CD4-positive, alpha-beta memory T cell (primary cell): ENCODE measurements at regions of chr19 and their contacts with region 1.

Region 1: GRCh38 chr19:47243776-47244547 is 12.4 kb upstream of the CCDC9 start:
- DNase-seq: peak; percentile 85 to 91 (median 87)
- H3K4me3 ChIP-seq: peak overlapping the region; percentile 21 to 37
- H3K4me3 Mint-ChIP-seq: peak overlapping the region; percentile 63 to 89 (median 84)
- H3K27ac ChIP-seq: peak overlapping the region; percentile 40
- H3K27ac Mint-ChIP-seq: peak overlapping the region in 6 of 7 donors; percentile 86 to 99 (median 96)
- H3K4me1 ChIP-seq: peaks cover 48% of the 10 kb centered on the region
- H3K4me1 Mint-ChIP-seq: peaks cover 11 to 33% (median 22%) of the 10 kb centered on the region in 4 donors
- H3K27me3 ChIP-seq: no peaks in the 10 kb centered on the region
- H3K27me3 Mint-ChIP-seq: no peaks in the 10 kb centered on the region

Region 2: DNA sequence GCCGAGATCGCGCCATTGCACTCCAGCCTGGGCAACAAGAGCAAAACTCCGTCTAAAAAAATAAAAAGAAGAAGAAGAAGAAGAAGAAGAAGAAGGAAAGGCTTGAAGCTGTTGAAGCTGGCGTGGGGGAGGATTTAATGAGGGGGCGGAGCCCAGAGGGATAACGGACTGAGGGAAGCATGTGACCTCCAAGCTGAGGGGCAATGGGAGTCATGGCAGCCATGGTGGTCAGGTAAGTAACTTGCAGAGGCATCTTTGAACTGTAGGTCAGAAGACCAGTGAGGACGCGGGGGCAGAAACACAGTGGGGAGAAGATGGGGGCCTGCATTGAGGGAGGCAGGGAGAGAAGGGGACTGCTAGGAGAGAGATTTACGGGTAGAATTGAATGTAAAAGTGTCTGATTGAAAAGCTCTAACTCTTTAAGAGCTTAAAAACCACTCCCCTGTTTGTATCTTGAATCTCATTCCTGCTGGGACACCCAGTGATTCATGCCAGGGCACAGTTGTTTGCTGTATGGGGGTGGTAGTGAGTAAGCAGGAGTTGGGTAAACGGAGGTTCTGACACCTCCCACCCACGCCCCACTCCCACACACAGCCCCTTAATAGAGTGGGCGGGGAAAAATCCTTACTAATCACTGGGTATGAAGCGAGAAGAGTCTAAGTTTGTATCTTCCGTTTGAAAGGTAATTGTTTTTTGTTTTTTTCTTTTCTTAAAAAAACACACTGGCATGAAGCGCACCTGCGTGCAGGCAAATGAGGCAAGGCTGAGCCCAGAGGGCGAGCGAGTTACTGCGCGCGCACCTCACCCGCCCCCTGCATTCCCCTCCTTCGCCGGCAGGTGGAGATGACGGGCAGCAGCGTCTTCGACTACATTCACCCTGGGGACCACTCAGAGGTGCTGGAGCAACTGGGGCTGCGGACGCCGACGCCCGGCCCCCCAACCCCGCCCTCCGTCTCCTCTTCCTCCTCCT is 208.6 kb before region 1 on chr19:
- CTCF ChIA-PET with region 1: interaction called, 3 read pairs
- POLR2A ChIA-PET with region 1: no interaction called
- intact Hi-C with region 1: loop called (anchors 5 kb)
- DNase-seq: peak; percentile 93 to 98 (median 94)
- H3K4me3 ChIP-seq: peak overlapping the region; percentile 36 to 44
- H3K4me3 Mint-ChIP-seq: peak overlapping the region; percentile 84 to 98 (median 88)
- H3K27ac ChIP-seq: no peak overlapping the region
- H3K27ac Mint-ChIP-seq: peak overlapping the region; percentile 73 to 90 (median 87)
- H3K4me1 ChIP-seq: peaks cover 23% of the 10 kb centered on the region
- H3K4me1 Mint-ChIP-seq: peaks cover 11 to 32% (median 21%) of the 10 kb centered on the region in 4 donors
- H3K27me3 ChIP-seq: no peaks in the 10 kb centered on the region
- H3K27me3 Mint-ChIP-seq: peaks cover 5 to 19% of the 10 kb centered on the region in 2 donors

Region 3: GRCh38 chr19:47143322-47144073 is 100.5 kb before region 1 on chr19:
- CTCF ChIA-PET with region 1: interaction called, 609 read pairs
- POLR2A ChIA-PET with region 1: interaction called, 31 read pairs
- intact Hi-C with region 1: no loop called
- DNase-seq: no peak
- H3K4me3 ChIP-seq: no peak overlapping the region
- H3K4me3 Mint-ChIP-seq: no peak overlapping the region
- H3K27ac ChIP-seq: no peak overlapping the region
- H3K27ac Mint-ChIP-seq: peak overlapping the region; percentile 30 to 87 (median 41)
- H3K4me1 ChIP-seq: peaks cover 37% of the 10 kb centered on the region
- H3K4me1 Mint-ChIP-seq: peaks cover 34 to 68% (median 48%) of the 10 kb centered on the region in 4 donors
- H3K27me3 ChIP-seq: no peaks in the 10 kb centered on the region
- H3K27me3 Mint-ChIP-seq: no peaks in the 10 kb centered on the region

Region 4: GRCh38 chr19:47176627-47177090 is 67.3 kb before region 1 on chr19:
- CTCF ChIA-PET with region 1: interaction called, 26 read pairs
- POLR2A ChIA-PET with region 1: interaction called, 11 read pairs
- intact Hi-C with region 1: no loop called
- DNase-seq: peak; percentile 65 to 79 (median 70)
- H3K4me3 ChIP-seq: peak overlapping the region in 1 of 2 donors; percentile 26
- H3K4me3 Mint-ChIP-seq: peak overlapping the region; percentile 67 to 92 (median 78)
- H3K27ac ChIP-seq: peak overlapping the region; percentile 39
- H3K27ac Mint-ChIP-seq: peak overlapping the region; percentile 88 to 96 (median 91)
- H3K4me1 ChIP-seq: peaks cover 55% of the 10 kb centered on the region
- H3K4me1 Mint-ChIP-seq: peaks cover 42 to 75% (median 54%) of the 10 kb centered on the region in 4 donors
- H3K27me3 ChIP-seq: no peaks in the 10 kb centered on the region
- H3K27me3 Mint-ChIP-seq: no peaks in the 10 kb centered on the region

Region 5: DNA sequence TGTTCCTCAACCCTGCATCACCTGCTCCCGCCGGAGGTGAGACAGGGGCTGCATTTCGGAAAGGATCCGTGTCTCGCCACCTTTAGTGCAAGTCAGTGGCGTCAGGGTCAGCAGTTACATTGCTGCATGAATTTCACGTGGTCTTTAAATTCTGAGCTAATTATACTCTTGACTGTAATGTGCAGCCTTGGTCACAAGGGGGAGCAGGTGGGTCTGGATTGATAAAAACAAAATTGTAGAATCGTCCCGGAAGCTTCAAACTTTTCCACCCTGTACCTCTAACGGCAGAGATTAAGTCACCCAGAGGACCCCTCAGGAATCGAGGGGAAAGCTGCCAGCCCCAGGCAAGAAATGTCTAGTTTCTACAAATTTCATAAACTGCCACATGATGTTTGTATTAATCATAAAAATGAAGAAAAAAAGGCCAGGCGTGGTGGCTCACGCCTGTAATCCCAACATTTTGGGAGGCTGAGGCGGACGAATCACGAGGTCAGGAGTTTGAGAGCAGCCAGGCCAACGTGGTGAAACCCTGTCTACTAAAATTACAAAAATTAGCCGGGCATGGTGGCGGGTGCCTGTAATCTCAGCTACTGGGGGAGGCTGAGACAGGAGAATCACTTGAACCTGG is 33.2 kb before region 1 on chr19:
- CTCF ChIA-PET with region 1: interaction called, 499 read pairs
- POLR2A ChIA-PET with region 1: interaction called, 120 read pairs
- intact Hi-C with region 1: loop called (anchors 1 kb)
- DNase-seq: peak; percentile 68 to 83 (median 75)
- H3K4me3 ChIP-seq: no peak overlapping the region
- H3K4me3 Mint-ChIP-seq: peak overlapping the region in 2 of 8 donors; percentile 4 to 48
- H3K27ac ChIP-seq: no peak overlapping the region
- H3K27ac Mint-ChIP-seq: peak overlapping the region; percentile 15 to 89 (median 43)
- H3K4me1 ChIP-seq: peaks cover 12% of the 10 kb centered on the region
- H3K4me1 Mint-ChIP-seq: peaks cover 6 to 15% (median 7%) of the 10 kb centered on the region in 4 donors
- H3K27me3 ChIP-seq: no peaks in the 10 kb centered on the region
- H3K27me3 Mint-ChIP-seq: no peaks in the 10 kb centered on the region

Region 6: DNA sequence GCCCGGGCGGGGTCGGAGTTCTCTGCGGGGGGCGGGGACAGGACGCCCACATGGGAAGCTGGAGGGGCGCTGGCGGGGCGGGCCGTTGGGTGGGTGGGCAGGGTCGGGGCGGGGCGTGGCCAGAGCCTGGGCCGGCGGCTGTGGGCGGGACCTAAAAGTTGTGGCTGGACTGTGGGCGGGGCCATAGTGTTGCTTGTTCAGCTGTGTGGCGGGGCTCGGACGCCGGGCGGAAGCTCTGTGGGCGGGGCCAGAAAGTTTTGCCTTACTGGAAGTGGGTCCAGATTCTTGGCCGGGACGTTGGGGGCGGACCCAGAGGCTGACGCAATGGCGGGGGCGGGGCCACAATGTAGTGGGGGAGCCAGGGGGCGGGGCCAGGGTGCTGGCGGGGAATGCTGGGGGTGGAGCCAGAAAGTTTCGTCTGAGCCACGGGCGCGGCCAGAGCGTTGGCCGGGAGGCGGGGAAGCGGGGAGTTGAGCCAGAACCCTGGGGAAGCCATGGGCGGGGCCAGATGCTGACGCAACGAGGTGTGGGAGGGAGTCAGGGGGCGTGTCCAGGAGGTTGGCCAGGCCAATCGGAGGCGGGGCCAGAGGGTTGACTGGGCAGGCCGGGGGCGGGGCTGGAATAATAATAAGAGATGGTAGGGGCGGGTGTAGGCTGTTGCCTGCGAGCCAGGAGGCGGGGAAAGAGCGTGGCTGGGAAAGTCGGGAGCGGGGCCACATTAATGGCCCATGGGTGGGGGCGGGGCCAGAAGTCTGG is 12.9 kb after region 1 on chr19:
- CTCF ChIA-PET with region 1: interaction called, 58 read pairs
- POLR2A ChIA-PET with region 1: interaction called, 35 read pairs
- intact Hi-C with region 1: no loop called
- DNase-seq: peak; percentile 97 to 99 (median 98)
- H3K4me3 ChIP-seq: peak overlapping the region; percentile 61 to 62
- H3K4me3 Mint-ChIP-seq: peak overlapping the region; percentile 88 to 98 (median 94)
- H3K27ac ChIP-seq: peak overlapping the region; percentile 76
- H3K27ac Mint-ChIP-seq: peak overlapping the region; percentile 94 to 99 (median 99)
- H3K4me1 ChIP-seq: peaks cover 18% of the 10 kb centered on the region
- H3K4me1 Mint-ChIP-seq: peaks cover 20 to 44% (median 31%) of the 10 kb centered on the region in 4 donors
- H3K27me3 ChIP-seq: no peaks in the 10 kb centered on the region
- H3K27me3 Mint-ChIP-seq: no peaks in the 10 kb centered on the region

Region 7: DNA sequence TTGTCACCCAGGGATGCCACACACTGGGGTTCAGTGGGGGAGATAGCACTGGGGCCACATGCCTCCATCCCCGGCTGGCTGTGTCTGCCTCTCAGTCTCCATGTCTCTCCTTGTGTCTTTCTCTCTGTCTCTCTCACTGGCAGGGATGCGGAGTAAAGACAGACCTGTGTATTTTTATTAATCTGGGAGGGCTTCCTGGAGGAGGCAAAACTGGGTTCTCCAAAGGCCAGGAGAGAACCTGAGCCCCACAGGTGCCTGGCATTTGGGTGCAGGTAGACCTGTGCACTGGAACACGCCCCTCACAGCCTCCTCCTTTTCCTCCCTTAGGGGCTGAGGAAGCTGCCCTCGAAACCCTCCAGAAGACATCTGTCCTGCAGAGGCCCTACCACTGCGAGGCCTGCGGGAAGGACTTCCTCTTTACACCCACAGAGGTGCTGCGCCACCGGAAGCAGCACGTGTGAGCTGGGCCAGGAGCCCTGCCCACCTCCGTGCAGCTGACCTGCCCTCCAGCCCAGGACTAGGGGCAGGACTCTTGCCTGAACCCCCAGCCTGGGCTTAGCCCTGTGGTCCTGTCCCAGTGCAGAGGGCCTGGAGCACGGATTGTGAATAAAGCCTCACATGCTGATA is 137.8 kb after region 1 on chr19:
- CTCF ChIA-PET with region 1: no interaction called
- POLR2A ChIA-PET with region 1: no interaction called
- intact Hi-C with region 1: no loop called
- DNase-seq: peak in 2 of 5 donors; percentile 12 to 21
- H3K4me3 ChIP-seq: no peak overlapping the region
- H3K4me3 Mint-ChIP-seq: no peak overlapping the region
- H3K27ac ChIP-seq: no peak overlapping the region
- H3K27ac Mint-ChIP-seq: peak overlapping the region; percentile 35 to 93 (median 72)
- H3K4me1 ChIP-seq: peaks cover 13% of the 10 kb centered on the region
- H3K4me1 Mint-ChIP-seq: peaks cover 10 to 25% (median 14%) of the 10 kb centered on the region in 4 donors
- H3K27me3 ChIP-seq: no peaks in the 10 kb centered on the region
- H3K27me3 Mint-ChIP-seq: no peaks in the 10 kb centered on the region

Region 8: DNA sequence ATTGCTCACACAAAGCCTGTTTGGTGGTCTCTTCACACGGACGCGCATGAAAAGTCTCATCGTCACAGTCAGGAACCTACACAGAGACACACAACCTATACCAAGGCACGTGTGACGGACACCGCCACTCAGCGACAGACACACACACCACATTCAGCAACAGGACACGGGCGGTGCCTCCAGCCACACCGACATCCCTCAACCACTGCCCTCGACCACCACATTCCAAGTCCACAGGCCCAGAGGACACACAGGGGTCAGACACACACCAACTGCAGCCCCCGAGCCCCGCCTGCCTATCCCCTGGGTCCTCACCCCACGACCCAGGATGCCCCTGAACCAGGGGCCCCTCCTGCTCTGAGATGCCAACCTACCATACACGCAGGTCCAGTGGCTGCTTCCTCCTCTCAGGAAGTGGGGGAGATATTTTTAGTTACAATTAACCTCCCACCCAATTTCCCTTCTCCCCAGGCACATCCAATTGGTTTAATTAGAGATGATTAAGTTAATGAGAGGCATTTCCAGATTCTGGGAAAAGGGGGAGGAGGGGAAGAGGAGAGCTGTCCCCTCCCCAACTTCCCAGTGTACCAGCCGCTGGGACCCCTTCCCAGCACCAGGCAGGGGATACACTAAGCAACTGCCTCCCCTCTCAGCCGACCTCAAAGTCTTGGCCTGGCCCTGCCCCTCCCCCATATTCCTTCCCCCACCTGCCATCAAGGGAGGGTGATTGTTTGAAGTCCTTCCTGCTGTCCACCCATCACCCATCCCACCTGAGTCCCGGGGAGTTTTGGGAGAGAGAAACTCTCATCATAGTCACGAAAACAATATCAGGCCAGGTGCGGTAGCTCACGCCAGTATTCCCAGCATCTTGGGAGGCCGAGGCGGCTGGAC is 155.0 kb after region 1 on chr19:
- CTCF ChIA-PET with region 1: no interaction called
- POLR2A ChIA-PET with region 1: no interaction called
- intact Hi-C with region 1: no loop called
- DNase-seq: no peak
- H3K4me3 ChIP-seq: no peak overlapping the region
- H3K4me3 Mint-ChIP-seq: no peak overlapping the region
- H3K27ac ChIP-seq: no peak overlapping the region
- H3K27ac Mint-ChIP-seq: peak overlapping the region in 1 of 7 donors; percentile 17
- H3K4me1 ChIP-seq: no peaks in the 10 kb centered on the region
- H3K4me1 Mint-ChIP-seq: no peaks in the 10 kb centered on the region
- H3K27me3 ChIP-seq: no peaks in the 10 kb centered on the region
- H3K27me3 Mint-ChIP-seq: peaks cover 4 to 14% of the 10 kb centered on the region in 2 donors